ENCODE measurements at regions of chr18 and their contacts with region 1.

Region 1: DNA sequence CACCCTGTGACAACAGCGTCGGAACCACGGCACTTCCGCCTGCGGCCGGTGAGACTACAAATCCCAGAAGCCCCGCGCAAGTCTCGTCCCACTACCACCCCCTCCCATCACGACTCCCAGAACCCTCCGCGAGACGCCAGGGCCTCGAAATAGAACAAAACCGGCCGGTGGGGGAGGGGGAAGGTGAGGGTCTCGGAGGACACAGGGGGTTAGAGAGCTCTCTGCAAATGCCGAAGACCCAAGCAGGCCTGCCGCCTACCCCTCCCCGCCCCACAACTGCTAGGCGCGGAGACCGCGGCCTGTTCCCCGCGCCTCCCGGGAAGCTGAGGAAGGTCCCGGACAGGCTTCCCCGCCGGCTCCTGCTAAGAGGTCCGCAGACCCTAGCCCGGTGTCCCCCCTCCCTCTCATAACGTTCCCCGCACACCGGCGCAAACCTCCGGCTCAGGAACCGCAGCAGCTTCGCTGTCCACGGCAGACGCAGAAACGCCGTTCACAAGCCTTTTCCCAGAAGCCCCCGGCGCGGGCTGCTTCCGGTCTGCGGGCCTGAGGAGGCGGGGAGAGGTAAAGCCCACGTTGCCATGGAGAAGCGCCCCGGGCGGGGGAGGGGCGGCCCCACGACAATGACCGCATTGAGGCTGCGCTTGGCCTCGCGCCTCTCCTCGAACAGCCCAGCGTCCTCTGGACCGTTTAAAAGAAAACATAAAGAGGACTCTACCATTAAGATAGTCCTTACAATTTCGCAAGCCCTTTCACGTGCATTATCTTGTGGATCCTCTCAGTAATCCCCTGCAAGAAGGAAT is at the start of gene ZNF24:
- DNase-seq: peak; percentile 95 to 97 (median 96)
- H3K4me3 ChIP-seq: peak within 1 kb of the TSS; percentile 61
- H3K27ac ChIP-seq: peak within 1 kb of the TSS; percentile 97 to 98
- H3K4me1 ChIP-seq: peaks cover 7% of the 10 kb centered on the region
- H3K27me3 ChIP-seq: no peaks in the 10 kb centered on the region
- CTCF ChIP-seq: peak in 1 of 3 donors; percentile 32
- EP300 ChIP-seq: no peak
- POLR2A ChIP-seq: peak; percentile 93
- total RNA-seq, gene ZNF24: 27.1 to 64.8 (median 48.7) TPM

Region 2: GRCh38 chr18:35267161-35267651 is 76.9 kb before region 1 on chr18:
- intact Hi-C with region 1: loop called in 1 of 4 experiments (anchors 5 kb)
- DNase-seq: peak; percentile 81 to 89 (median 85)
- H3K4me3 ChIP-seq: peak overlapping the region; percentile 63
- H3K27ac ChIP-seq: peak overlapping the region; percentile 59 to 80
- H3K4me1 ChIP-seq: no peaks in the 10 kb centered on the region
- H3K27me3 ChIP-seq: no peaks in the 10 kb centered on the region
- CTCF ChIP-seq: peak in 2 of 3 donors; percentile 20 to 25
- EP300 ChIP-seq: no peak
- POLR2A ChIP-seq: peak; percentile 30

Measured in ovary (tissue), 10 donors.